ENCODE measurements at regions of chr2 and their contacts with region 1.

Region 1: GRCh38 chr2:74958274-74959105 is at the start of gene POLE4:
- DNase-seq: peak; percentile 89 to 96 (median 93)
- ATAC-seq: peak; percentile 85
- H3K4me3 ChIP-seq: peak within 1 kb of the TSS; percentile 58 to 87
- H3K4me3 Mint-ChIP-seq: peak within 1 kb of the TSS; percentile 83
- H3K27ac ChIP-seq: peak within 1 kb of the TSS; percentile 80 to 83
- H3K27ac Mint-ChIP-seq: peak within 1 kb of the TSS; percentile 89
- H3K4me1 ChIP-seq: peaks cover 16% of the 10 kb centered on the region
- H3K4me1 Mint-ChIP-seq: peaks cover 55% of the 10 kb centered on the region
- H3K27me3 ChIP-seq: no peaks in the 10 kb centered on the region
- H3K27me3 Mint-ChIP-seq: no peaks in the 10 kb centered on the region
- CTCF ChIP-seq: no peak
- total RNA-seq, gene POLE4: 32.7 to 35.8 TPM

Region 2: DNA sequence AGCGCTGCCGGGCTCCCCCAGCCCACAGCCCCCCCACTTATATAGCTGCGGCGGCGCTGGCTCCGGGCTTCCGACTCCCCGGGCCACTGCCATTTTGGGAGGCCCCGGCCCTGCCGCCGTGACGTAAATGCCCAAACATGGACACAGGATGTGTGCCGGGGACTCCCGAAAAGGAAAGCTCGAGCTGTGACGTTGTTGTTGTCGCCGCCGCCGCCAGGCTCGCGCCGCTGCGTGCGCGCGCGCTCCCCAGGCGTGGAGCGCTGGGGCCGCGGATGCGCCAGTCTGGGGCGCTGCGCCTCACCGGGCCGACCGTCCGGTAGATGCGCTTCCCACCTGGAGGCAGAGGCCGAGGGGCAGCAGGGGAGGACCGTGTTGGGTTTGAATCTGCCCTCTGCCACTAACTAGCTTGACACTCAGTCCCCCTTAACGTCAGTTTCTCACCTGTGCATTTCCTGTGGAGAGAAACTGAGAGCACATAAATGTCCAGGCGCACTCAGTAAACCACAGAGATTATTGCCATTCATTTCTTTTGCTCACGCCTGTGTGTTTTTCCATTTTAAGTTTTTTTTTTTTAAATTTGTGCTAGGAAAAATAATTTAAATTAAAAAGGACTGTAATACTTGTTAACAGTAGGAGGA is 1664.8 kb before region 1 on chr2 and contains the start of gene EGR4:
- CTCF ChIA-PET with region 1: no interaction called
- POLR2A ChIA-PET with region 1: no interaction called
- intact Hi-C with region 1: loop called in 1 of 2 experiments (anchors 5 kb)
- DNase-seq: peak; percentile 74 to 96 (median 84)
- ATAC-seq: peak; percentile 92
- H3K4me3 ChIP-seq: peak within 1 kb of the TSS; percentile 51 to 73
- H3K4me3 Mint-ChIP-seq: peak within 1 kb of the TSS; percentile 78
- H3K27ac ChIP-seq: no peak within 1 kb of the TSS
- H3K27ac Mint-ChIP-seq: no peak within 1 kb of the TSS
- H3K4me1 ChIP-seq: peaks cover 26% of the 10 kb centered on the region
- H3K4me1 Mint-ChIP-seq: peaks cover 14% of the 10 kb centered on the region
- H3K27me3 ChIP-seq: peaks cover 35 to 37% of the 10 kb centered on the region in 2 experiments
- H3K27me3 Mint-ChIP-seq: peaks cover 62% of the 10 kb centered on the region
- CTCF ChIP-seq: no peak
- total RNA-seq, gene EGR4: 0.14 to 0.22 TPM

Region 3: GRCh38 chr2:74147727-74148456 is 810.6 kb before region 1 on chr2 and contains the start of gene BOLA3:
- CTCF ChIA-PET with region 1: no interaction called
- POLR2A ChIA-PET with region 1: no interaction called
- intact Hi-C with region 1: no loop called
- DNase-seq: peak; percentile 58 to 90 (median 82)
- ATAC-seq: peak; percentile 90
- H3K4me3 ChIP-seq: peak within 1 kb of the TSS; percentile 51 to 73
- H3K4me3 Mint-ChIP-seq: no peak within 1 kb of the TSS
- H3K27ac ChIP-seq: peak within 1 kb of the TSS; percentile 21 to 66
- H3K27ac Mint-ChIP-seq: no peak within 1 kb of the TSS
- H3K4me1 ChIP-seq: peaks cover 12% of the 10 kb centered on the region
- H3K4me1 Mint-ChIP-seq: peaks cover 4% of the 10 kb centered on the region
- H3K27me3 ChIP-seq: no peaks in the 10 kb centered on the region
- H3K27me3 Mint-ChIP-seq: no peaks in the 10 kb centered on the region
- CTCF ChIP-seq: peak; percentile 66
- total RNA-seq, gene BOLA3: 9.9 to 10.1 TPM

Region 4: DNA sequence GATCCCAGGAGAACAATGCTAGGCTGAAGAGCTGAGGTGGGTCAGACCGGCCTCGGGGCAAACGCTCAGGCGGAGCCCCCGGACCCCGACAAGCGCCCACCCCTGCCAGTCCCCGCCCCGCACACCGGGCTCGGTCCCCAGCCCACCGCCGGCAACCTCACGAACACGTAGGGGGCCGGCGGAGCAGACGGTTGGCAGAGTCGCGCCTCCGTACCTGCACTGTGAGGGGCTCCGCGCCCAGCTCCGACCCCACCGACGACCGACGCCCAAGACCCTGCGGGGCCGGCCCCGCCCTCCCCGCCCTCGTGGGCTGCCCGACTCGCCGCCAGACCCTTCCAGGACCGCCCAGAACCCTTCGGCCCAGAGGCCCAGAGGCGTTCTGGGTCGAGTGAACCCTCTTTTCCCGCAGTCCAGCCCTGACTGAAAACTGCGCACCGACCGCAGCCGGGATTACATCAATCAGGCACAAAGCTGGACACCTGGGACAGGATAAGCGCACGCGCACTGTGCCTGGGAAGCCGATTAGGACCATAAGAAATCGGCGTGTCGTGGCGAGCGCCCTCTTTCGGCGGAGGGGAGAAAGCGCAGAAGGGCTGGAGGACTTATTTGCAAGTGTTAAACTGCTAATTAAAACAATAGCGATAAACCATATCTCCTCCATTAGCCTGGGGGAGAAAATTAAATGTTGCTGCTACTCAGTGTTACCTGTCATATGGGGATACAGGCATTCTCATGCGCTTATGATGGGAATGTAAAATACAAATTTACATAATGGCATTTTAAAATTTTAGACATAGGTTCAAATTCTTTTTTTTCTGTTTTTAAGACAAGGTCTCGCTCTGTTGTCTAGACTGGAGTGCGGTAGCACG is 566.7 kb before region 1 on chr2:
- CTCF ChIA-PET with region 1: no interaction called
- POLR2A ChIA-PET with region 1: no interaction called
- intact Hi-C with region 1: loop called in 1 of 2 experiments (anchors 10 kb)
- DNase-seq: peak; percentile 91 to 98 (median 95)
- ATAC-seq: peak; percentile 90
- H3K4me3 ChIP-seq: peak overlapping the region; percentile 67 to 87
- H3K4me3 Mint-ChIP-seq: peak overlapping the region; percentile 99
- H3K27ac ChIP-seq: peak overlapping the region; percentile 87 to 96
- H3K27ac Mint-ChIP-seq: peak overlapping the region; percentile 100
- H3K4me1 ChIP-seq: peaks cover 20% of the 10 kb centered on the region
- H3K4me1 Mint-ChIP-seq: peaks cover 9% of the 10 kb centered on the region
- H3K27me3 ChIP-seq: no peaks in the 10 kb centered on the region
- H3K27me3 Mint-ChIP-seq: no peaks in the 10 kb centered on the region
- CTCF ChIP-seq: peak; percentile 96

Region 5: GRCh38 chr2:74553892-74554645 is 404.4 kb before region 1 on chr2 and contains the start of gene LOXL3:
- CTCF ChIA-PET with region 1: no interaction called
- POLR2A ChIA-PET with region 1: no interaction called
- intact Hi-C with region 1: loop called in 1 of 2 experiments (anchors 10 kb)
- DNase-seq: peak in 6 of 9 experiments; percentile 58 to 87 (median 70)
- ATAC-seq: peak; percentile 63
- H3K4me3 ChIP-seq: peak within 1 kb of the TSS; percentile 97 to 100
- H3K4me3 Mint-ChIP-seq: peak within 1 kb of the TSS; percentile 91
- H3K27ac ChIP-seq: peak within 1 kb of the TSS; percentile 66 to 77
- H3K27ac Mint-ChIP-seq: peak within 1 kb of the TSS; percentile 84
- H3K4me1 ChIP-seq: peaks cover 17% of the 10 kb centered on the region
- H3K4me1 Mint-ChIP-seq: peaks cover 10% of the 10 kb centered on the region
- H3K27me3 ChIP-seq: peaks cover 2 to 11% of the 10 kb centered on the region in 2 experiments
- H3K27me3 Mint-ChIP-seq: peaks cover 19% of the 10 kb centered on the region
- CTCF ChIP-seq: no peak
- total RNA-seq, gene LOXL3: not detected

Region 6: DNA sequence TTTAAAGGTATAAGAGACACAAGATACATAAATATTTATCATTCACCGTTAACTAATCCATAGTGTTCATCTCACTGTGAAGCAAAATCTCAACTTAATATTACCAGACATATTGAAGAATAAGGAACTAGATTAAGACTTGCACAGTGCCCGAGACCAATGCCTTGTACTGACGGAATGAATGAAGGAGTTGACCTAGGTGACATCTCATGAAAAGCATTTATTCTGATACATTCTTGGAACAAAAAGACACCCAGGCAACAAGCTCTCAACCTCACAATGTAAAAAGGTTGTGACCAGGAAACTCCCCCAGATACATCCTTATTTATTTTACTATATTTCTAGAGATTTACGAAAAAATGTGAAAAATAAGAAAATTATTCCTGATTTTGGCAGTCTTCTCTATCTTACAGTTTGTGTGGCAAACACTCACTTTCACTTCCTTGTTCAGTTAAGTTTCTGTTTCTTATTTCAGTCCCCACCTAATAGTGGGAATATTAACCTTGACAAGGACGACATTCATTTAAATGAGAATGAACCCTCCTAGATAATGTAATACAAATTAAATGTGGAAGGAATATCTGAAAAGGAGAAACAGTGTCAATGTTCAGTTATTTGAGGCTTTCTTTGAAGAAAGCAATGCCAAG is 338.7 kb before region 1 on chr2:
- CTCF ChIA-PET with region 1: no interaction called
- POLR2A ChIA-PET with region 1: no interaction called
- intact Hi-C with region 1: no loop called
- DNase-seq: no peak
- ATAC-seq: no peak
- H3K4me3 ChIP-seq: no peak overlapping the region
- H3K4me3 Mint-ChIP-seq: no peak overlapping the region
- H3K27ac ChIP-seq: no peak overlapping the region
- H3K27ac Mint-ChIP-seq: no peak overlapping the region
- H3K4me1 ChIP-seq: no peaks in the 10 kb centered on the region
- H3K4me1 Mint-ChIP-seq: no peaks in the 10 kb centered on the region
- H3K27me3 ChIP-seq: no peaks in the 10 kb centered on the region
- H3K27me3 Mint-ChIP-seq: peaks cover 12% of the 10 kb centered on the region
- CTCF ChIP-seq: no peak

Region 7: GRCh38 chr2:74845217-74846011 is 113.1 kb before region 1 on chr2:
- CTCF ChIA-PET with region 1: no interaction called
- POLR2A ChIA-PET with region 1: no interaction called
- intact Hi-C with region 1: loop called (anchors 5 kb)
- DNase-seq: peak in 5 of 9 experiments; percentile 15 to 43 (median 23)
- ATAC-seq: no peak
- H3K4me3 ChIP-seq: no peak overlapping the region
- H3K4me3 Mint-ChIP-seq: peak overlapping the region; percentile 37
- H3K27ac ChIP-seq: no peak overlapping the region
- H3K27ac Mint-ChIP-seq: no peak overlapping the region
- H3K4me1 ChIP-seq: peaks cover 97% of the 10 kb centered on the region
- H3K4me1 Mint-ChIP-seq: peaks cover 90% of the 10 kb centered on the region
- H3K27me3 ChIP-seq: no peaks in the 10 kb centered on the region
- H3K27me3 Mint-ChIP-seq: no peaks in the 10 kb centered on the region
- CTCF ChIP-seq: no peak

Region 8: GRCh38 chr2:75646583-75647425 is 688.3 kb after region 1 on chr2 and contains the start of gene MRPL19:
- CTCF ChIA-PET with region 1: no interaction called
- POLR2A ChIA-PET with region 1: no interaction called
- intact Hi-C with region 1: loop called (anchors 1 to 5 kb)
- DNase-seq: peak; percentile 48 to 90 (median 75)
- ATAC-seq: peak; percentile 96
- H3K4me3 ChIP-seq: peak within 1 kb of the TSS; percentile 79 to 94
- H3K4me3 Mint-ChIP-seq: peak within 1 kb of the TSS; percentile 96
- H3K27ac ChIP-seq: peak within 1 kb of the TSS; percentile 60 to 63
- H3K27ac Mint-ChIP-seq: peak within 1 kb of the TSS; percentile 94
- H3K4me1 ChIP-seq: peaks cover 10% of the 10 kb centered on the region
- H3K4me1 Mint-ChIP-seq: peaks cover 42% of the 10 kb centered on the region
- H3K27me3 ChIP-seq: no peaks in the 10 kb centered on the region
- H3K27me3 Mint-ChIP-seq: no peaks in the 10 kb centered on the region
- CTCF ChIP-seq: no peak
- total RNA-seq, gene MRPL19: 17.2 to 18.1 TPM